IMR-90 (cell line): ENCODE measurements at regions of chr3 and their contacts with region 1.

Region 1: DNA sequence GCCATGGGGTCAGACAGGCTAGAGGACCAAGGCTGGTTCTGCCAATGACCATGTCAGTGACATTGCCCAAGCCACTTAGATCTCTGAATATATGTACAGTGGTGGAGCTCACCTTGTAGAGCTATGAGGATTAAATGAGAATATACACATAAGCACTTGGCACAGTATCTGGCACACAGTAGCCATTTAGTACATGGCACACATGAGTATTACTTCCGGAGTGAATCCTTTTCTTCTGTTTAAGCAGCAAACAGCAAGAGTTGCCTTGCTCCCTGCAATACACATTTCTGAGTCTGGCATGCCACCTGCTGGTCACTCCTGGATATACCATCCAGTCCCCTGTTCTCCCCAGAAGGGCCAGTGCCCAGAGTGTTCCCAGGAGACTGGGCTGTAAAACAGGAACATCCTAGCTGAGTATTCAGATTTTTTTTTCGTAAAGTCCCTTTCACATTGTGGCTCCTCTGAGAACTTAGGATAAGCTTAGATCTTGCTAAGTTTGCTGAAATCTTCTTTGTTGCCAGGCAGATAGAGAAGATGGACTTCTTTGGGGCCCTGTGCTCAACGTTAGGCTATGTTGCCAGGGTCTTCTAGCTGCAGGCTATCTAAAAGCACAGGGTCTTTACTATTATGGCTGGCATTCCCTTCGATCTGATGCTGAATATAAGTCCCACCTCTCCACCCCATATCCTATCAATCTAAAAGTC is 203.4 kb downstream of the ADAMTS9 start:
- DNase-seq: peak; percentile 80
- ATAC-seq: peak; percentile 100
- H3K4me3 ChIP-seq: no peak overlapping the region
- H3K27ac ChIP-seq: no peak overlapping the region
- H3K4me1 ChIP-seq: no peaks in the 10 kb centered on the region
- H3K27me3 ChIP-seq: no peaks in the 10 kb centered on the region
- CTCF ChIP-seq: peak; percentile 92
- POLR2A ChIP-seq: 0 out of 2 replicates have a peak, but pooled peaks have one; percentile 34
- RAD21 ChIP-seq: peak; percentile 99

Region 2: DNA sequence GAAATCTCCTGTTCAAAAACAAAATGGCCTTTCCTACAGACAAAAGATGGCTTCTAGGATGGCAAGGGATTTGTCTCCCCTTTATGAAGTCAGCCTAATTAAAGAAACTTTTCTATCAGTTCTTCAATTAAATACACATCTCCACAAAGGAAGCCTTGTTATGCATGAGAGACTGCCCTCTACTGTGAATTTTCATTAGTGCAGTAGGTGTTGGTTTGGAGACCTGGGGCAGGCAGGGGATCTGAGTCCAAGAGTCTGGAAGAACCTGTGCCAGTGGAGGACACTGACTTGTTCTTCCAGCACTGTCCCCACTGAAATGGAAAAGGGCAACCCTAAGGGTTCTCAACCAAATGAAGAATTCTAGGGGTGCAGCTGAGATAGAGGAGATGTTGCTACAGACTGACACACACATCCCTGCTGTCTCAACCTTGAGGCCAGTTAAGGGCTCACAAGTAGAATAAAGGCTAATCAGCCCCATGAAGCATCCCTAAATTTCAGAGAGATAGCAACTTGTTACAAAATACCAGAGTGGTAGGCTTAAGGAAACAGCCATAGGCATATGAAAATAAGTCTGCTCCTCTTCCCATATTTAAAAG is 85.1 kb before region 1 on chr3:
- CTCF ChIA-PET with region 1: no interaction called
- POLR2A ChIA-PET with region 1: no interaction called
- dilution Hi-C with region 1: no loop called
- in situ Hi-C with region 1: loop called (anchors 5 kb)
- intact Hi-C with region 1: loop called (anchors 1 kb)
- DNase-seq: peak; percentile 70
- ATAC-seq: peak; percentile 89
- H3K4me3 ChIP-seq: no peak overlapping the region
- H3K27ac ChIP-seq: no peak overlapping the region
- H3K4me1 ChIP-seq: peaks cover 2% of the 10 kb centered on the region
- H3K27me3 ChIP-seq: no peaks in the 10 kb centered on the region
- CTCF ChIP-seq: peak; percentile 85
- POLR2A ChIP-seq: no peak
- RAD21 ChIP-seq: peak; percentile 95